Activated CD4-positive, alpha-beta T cell treated with anti-CD3 and anti-CD28 coated beads for 36 hours (primary cell): ENCODE measurements at regions of chr17 and their contacts with region 1.

Region 1: GRCh38 chr17:67850991-67851631 is 25.8 kb downstream of the BPTF start:
- DNase-seq: no peak
- ATAC-seq: no peak
- H3K4me3 Mint-ChIP-seq: no peak overlapping the region
- H3K27ac Mint-ChIP-seq: no peak overlapping the region
- H3K4me1 Mint-ChIP-seq: peaks cover 51% of the 10 kb centered on the region
- H3K27me3 Mint-ChIP-seq: no peaks in the 10 kb centered on the region

Region 2: GRCh38 chr17:67836205-67836987 is 14.7 kb before region 1 on chr17:
- CTCF ChIA-PET with region 1: interaction called, 3 read pairs
- POLR2A ChIA-PET with region 1: interaction called, 10 read pairs
- intact Hi-C with region 1: no loop called
- DNase-seq: no peak
- ATAC-seq: peak; percentile 93
- H3K4me3 Mint-ChIP-seq: peak overlapping the region; percentile 29
- H3K27ac Mint-ChIP-seq: peak overlapping the region; percentile 68
- H3K4me1 Mint-ChIP-seq: peaks cover 76% of the 10 kb centered on the region
- H3K27me3 Mint-ChIP-seq: no peaks in the 10 kb centered on the region

Region 3: GRCh38 chr17:68035523-68036303 is 184.6 kb after region 1 on chr17 and contains the start of gene KPNA2:
- CTCF ChIA-PET with region 1: no interaction called
- POLR2A ChIA-PET with region 1: no interaction called
- intact Hi-C with region 1: no loop called
- DNase-seq: peak; percentile 93
- ATAC-seq: peak; percentile 91
- H3K4me3 Mint-ChIP-seq: peak within 1 kb of the TSS; percentile 96
- H3K27ac Mint-ChIP-seq: peak within 1 kb of the TSS; percentile 97
- H3K4me1 Mint-ChIP-seq: peaks cover 18% of the 10 kb centered on the region
- H3K27me3 Mint-ChIP-seq: no peaks in the 10 kb centered on the region
- total RNA-seq, gene KPNA2: 186 to 190 TPM